Right ventricle myocardium superior (tissue), 1 donor: ENCODE measurements at regions of chr11 and their contacts with region 1.

Region 1: GRCh38 chr11:18934195-18934814 is 4.9 kb downstream of the MRGPRX1 start:
- DNase-seq: no peak
- ATAC-seq: no peak

Region 2: GRCh38 chr11:18981897-18982296 is 47.6 kb after region 1 on chr11:
- intact Hi-C with region 1: loop called (anchors 5 kb)
- DNase-seq: no peak
- ATAC-seq: no peak

Region 3: GRCh38 chr11:19200410-19201201 is 266.3 kb after region 1 on chr11:
- intact Hi-C with region 1: no loop called
- DNase-seq: peak; percentile 49
- ATAC-seq: peak; percentile 35

Region 4: GRCh38 chr11:19232910-19233503 is 298.7 kb after region 1 on chr11:
- intact Hi-C with region 1: no loop called
- DNase-seq: no peak
- ATAC-seq: no peak